Activated T-helper 1 cell treated with anti-CD3 and anti-CD28 coated beads, Interleukin-12 subunit alpha, Interleukin-12 subunit beta, Interleukin-2, Interleukin-4 antibody, amounts not matched to agents 30 ng/mL and 10 ng/mL and 1 ng/mL, durations not matched to agents 14 hours and 24 hours and 36 hours (primary cell): ENCODE measurements at regions of chr1 and their contacts with region 1.

Region 1: DNA sequence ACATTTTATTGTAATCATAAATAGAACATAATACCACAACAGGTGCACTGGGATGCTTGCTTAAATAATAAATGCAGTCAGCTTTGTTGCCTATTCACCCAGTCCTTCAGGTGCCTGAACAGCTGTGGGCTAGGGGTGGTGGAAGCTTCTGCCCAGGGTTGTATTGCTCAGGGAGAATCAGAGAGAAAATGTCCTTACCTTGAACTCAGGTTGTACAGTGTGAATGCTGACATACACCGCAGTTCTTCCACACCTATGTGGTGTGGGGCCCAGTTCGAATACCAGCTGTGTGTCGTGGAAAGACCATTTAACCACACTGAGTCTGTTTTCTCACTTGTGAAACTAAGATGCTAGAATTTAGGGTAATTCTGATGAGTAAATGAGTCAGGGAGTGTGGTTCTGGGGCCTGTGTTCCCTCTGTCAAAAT is 115.7 kb upstream of the ATP1A1 start:
- DNase-seq: peak; percentile 6
- H3K4me3 Mint-ChIP-seq: peak overlapping the region; percentile 31
- H3K27ac Mint-ChIP-seq: peak overlapping the region; percentile 69
- H3K4me1 Mint-ChIP-seq: peaks cover 31% of the 10 kb centered on the region
- H3K27me3 Mint-ChIP-seq: peaks cover 5% of the 10 kb centered on the region

Region 2: DNA sequence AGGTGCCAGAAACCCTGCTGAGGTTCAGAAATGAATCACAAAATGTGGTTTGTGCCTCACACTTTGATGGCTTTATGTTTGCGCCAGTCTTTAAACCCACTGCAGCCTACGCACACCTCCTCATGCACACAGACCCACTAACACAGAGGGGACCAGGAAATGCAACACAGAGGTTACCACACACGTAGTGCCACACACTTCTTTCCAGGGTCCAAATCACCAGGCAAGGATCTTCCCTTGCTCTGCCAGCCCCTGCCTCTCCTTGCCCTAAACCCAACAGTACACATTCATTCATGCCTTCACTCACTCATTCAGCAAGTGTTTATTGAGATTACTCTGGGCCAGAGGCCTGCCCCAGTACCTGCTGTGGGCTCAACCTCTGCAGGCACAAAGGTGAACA is 128.7 kb before region 1 on chr1:
- intact Hi-C with region 1: loop called (anchors 5 kb)
- DNase-seq: no peak
- H3K4me3 Mint-ChIP-seq: no peak overlapping the region
- H3K27ac Mint-ChIP-seq: no peak overlapping the region
- H3K4me1 Mint-ChIP-seq: peaks cover 22% of the 10 kb centered on the region
- H3K27me3 Mint-ChIP-seq: peaks cover 20% of the 10 kb centered on the region